Activated CD4-positive, alpha-beta memory T cell treated with anti-CD3 and anti-CD28 coated beads for 36 hours (primary cell): ENCODE measurements at regions of chr4 and their contacts with region 1.

Region 1: DNA sequence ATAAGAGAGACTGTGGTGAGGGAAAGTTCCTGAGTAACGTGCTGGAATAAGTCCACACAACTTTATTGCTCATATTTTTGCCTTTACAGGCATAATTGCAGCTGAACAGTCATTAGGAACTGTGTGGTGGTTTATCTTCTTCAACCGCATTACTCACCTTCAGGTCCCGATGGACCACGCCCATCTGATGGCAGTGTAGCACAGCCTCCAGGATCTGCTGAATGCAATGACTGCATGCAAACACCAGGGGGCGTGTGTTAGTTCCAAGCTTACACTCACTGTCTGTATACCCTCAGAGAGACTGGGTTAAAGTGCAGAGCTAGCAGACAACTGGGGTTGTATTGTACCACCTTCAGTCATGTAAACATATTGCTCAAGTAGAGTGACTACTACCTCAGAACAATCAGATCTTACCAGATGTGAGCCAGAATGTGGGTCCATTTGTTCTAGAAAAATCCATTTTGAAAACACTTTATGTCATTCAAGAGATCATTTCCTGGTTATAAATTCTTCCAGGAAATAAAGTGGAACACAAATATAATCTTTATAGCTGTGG is 214.0 kb downstream of the CAMK2D start:
- DNase-seq: peak; percentile 95
- H3K4me3 Mint-ChIP-seq: peak overlapping the region; percentile 12
- H3K27ac Mint-ChIP-seq: peak overlapping the region; percentile 21
- H3K4me1 Mint-ChIP-seq: peaks cover 21% of the 10 kb centered on the region
- H3K27me3 Mint-ChIP-seq: no peaks in the 10 kb centered on the region

Region 2: GRCh38 chr4:113355550-113356371 is 191.8 kb before region 1 on chr4:
- CTCF ChIA-PET with region 1: interaction called, 3 read pairs
- POLR2A ChIA-PET with region 1: no interaction called
- intact Hi-C with region 1: loop called (anchors 1 kb)
- DNase-seq: peak; percentile 88
- H3K4me3 Mint-ChIP-seq: peak overlapping the region; percentile 36
- H3K27ac Mint-ChIP-seq: peak overlapping the region; percentile 92
- H3K4me1 Mint-ChIP-seq: peaks cover 39% of the 10 kb centered on the region
- H3K27me3 Mint-ChIP-seq: peaks cover 45% of the 10 kb centered on the region

Region 3: GRCh38 chr4:113375964-113376666 is 171.4 kb before region 1 on chr4:
- CTCF ChIA-PET with region 1: no interaction called
- POLR2A ChIA-PET with region 1: no interaction called
- intact Hi-C with region 1: no loop called
- DNase-seq: no peak
- H3K4me3 Mint-ChIP-seq: no peak overlapping the region
- H3K27ac Mint-ChIP-seq: no peak overlapping the region
- H3K4me1 Mint-ChIP-seq: no peaks in the 10 kb centered on the region
- H3K27me3 Mint-ChIP-seq: peaks cover 10% of the 10 kb centered on the region

Region 4: GRCh38 chr4:113564493-113564892 is 16.9 kb after region 1 on chr4:
- CTCF ChIA-PET with region 1: interaction called, 34 read pairs
- POLR2A ChIA-PET with region 1: no interaction called
- intact Hi-C with region 1: loop called (anchors 1 kb)
- DNase-seq: no peak
- H3K4me3 Mint-ChIP-seq: no peak overlapping the region
- H3K27ac Mint-ChIP-seq: no peak overlapping the region
- H3K4me1 Mint-ChIP-seq: peaks cover 35% of the 10 kb centered on the region
- H3K27me3 Mint-ChIP-seq: no peaks in the 10 kb centered on the region

Region 5: DNA sequence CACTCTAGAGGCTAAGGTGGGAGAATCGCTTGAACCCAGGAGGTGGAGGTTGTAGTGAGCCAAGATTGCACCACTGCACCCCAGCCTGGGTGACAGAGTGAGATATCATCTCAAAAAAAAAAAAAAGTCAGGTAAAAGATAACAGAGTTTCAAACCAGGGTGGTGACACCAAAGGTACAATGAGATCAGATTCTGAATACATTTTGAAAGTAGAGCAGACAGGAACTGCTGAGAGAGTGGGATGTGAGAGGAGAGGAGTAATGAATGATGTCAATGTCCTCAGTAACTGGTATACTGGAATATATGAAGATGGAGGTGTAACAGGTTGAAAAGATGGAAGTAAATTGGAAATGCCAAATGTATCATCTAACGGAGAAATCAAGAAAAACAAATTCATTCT is 78.3 kb after region 1 on chr4:
- CTCF ChIA-PET with region 1: interaction called, 3 read pairs
- POLR2A ChIA-PET with region 1: no interaction called
- intact Hi-C with region 1: loop called (anchors 2 kb)
- DNase-seq: peak; percentile 36
- H3K4me3 Mint-ChIP-seq: no peak overlapping the region
- H3K27ac Mint-ChIP-seq: peak overlapping the region; percentile 13
- H3K4me1 Mint-ChIP-seq: peaks cover 45% of the 10 kb centered on the region
- H3K27me3 Mint-ChIP-seq: no peaks in the 10 kb centered on the region

Region 6: DNA sequence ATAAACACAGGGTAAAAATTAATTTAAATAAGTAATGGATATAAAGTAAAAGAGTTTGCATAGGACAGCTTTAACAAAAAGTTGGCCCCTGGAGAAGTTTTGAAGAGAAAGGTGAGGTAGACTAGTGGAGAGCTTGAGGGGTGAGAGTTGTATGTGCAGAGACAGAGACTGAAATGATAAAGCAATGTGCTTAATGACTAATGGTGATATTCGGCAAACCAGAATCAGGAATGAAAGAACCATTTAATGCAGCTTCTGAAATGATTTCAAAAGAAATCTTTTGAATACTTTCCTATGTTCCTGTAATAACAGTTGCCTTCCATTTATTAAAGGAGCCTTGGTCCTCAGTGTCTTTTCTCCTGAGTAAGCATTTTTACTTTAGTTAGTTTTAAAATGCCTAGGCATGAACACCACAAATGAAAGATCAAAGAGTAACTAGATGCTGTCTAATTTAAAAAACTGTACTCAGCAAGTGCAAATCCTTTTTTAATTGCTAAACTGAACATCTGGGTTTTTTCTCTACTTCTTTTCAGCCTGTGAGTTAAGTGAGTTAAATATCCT is 185.5 kb after region 1 on chr4:
- CTCF ChIA-PET with region 1: interaction called, 5 read pairs
- POLR2A ChIA-PET with region 1: no interaction called
- intact Hi-C with region 1: loop called (anchors 1 kb)
- DNase-seq: no peak
- H3K4me3 Mint-ChIP-seq: peak overlapping the region; percentile 0
- H3K27ac Mint-ChIP-seq: peak overlapping the region; percentile 26
- H3K4me1 Mint-ChIP-seq: peaks cover 62% of the 10 kb centered on the region
- H3K27me3 Mint-ChIP-seq: no peaks in the 10 kb centered on the region

Region 7: DNA sequence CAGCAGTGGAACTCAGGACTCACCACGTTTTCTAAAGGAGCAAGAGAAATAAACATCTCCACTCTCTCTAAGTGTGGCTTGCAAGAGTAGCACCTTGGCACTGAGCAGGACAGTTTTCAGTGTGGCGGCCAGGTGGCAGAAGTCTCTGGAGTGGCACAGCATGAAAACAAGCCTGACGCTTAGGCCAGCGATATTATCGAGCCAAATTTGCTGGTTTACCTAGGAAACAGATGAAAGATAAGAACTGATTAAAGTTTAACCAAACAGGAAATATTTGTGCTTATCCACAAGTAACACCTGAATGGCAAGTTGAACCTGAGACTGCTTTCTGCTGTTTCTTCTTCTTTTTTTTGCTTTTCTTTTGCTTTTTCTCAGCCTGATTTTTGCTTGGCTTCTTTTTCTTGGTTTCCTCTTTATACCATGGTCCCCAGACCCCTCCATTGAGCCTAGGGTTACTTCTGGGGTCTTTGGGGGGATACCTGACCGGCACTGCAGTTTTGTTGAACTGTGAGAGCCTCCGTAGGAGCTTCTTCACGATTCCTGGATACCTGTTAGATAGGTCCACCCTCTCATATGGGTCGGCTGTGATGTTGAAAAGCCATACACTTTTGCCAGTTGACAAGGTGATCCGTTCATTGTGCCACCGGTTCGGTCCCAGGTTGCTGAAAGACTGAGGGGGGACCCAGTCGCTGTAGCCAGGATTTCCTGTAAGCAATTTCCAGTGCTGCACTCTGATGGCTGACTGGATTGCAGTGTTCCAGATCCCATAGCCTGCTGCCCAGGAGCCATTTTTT is 354.6 kb after region 1 on chr4:
- CTCF ChIA-PET with region 1: no interaction called
- POLR2A ChIA-PET with region 1: no interaction called
- intact Hi-C with region 1: loop called (anchors 2 kb)
- DNase-seq: peak; percentile 80
- H3K4me3 Mint-ChIP-seq: peak overlapping the region; percentile 76
- H3K27ac Mint-ChIP-seq: peak overlapping the region; percentile 68
- H3K4me1 Mint-ChIP-seq: peaks cover 62% of the 10 kb centered on the region
- H3K27me3 Mint-ChIP-seq: no peaks in the 10 kb centered on the region